Right ventricle myocardium inferior (tissue), 1 donor: ENCODE measurements at regions of chr3 and their contacts with region 1.

Region 1: DNA sequence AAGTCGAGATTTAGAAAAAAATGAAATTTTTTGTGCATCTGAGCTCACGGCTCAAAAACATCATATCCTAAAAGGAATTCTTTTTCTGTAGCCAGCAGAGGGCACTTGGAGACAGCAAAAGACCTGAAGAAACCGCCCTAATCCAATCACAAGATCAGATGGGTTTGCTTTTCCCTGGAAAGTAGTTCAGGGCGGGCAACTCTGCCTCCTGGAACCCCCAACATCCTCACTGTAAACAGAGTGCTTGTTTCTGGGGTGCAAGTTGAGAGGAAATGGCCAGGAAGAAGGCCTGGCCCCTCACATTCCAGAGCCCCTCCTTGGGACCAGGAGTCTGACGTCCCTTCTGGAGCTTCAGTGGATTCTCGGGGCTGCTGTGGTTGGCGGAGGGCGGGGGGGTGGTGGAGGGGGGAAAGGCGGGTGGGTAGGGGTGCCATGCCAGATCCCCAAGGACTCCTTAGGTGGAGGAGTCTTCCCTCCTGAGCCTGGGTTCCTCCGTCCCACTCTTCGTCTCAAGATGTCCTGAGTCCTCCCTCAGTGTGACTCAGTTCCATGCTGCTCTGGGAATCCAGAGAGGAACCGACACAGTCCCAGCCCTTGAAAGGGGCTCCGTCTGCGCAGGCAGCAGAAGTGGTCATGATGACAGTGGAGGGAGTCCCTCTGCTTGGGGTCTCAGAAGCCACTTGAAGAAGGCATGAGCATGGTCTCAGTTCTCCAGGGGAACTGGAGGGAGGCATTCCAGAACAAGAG is 35.9 kb downstream of the CCK start:
- DNase-seq: no peak
- ATAC-seq: no peak

Region 2: DNA sequence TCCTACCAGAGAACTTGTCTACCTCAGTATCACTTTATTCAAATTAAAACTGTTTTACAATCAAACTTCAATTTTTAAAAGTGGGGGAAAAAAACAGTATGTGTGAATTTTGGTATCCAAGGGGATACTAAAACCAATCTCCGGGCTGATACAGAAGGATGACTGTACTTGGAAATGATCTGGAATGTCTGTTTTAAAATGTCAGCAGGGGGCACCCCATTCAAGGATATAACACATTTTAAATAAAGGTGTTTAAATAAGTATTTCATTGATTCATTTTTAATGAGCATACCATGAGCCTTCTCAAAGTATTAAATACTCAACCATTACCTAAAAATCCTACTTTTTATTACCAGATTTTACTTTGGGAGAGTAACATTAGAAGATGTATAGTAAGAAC is 336.1 kb before region 1 on chr3:
- intact Hi-C with region 1: loop called (anchors 10 kb)
- DNase-seq: no peak
- ATAC-seq: no peak

Region 3: DNA sequence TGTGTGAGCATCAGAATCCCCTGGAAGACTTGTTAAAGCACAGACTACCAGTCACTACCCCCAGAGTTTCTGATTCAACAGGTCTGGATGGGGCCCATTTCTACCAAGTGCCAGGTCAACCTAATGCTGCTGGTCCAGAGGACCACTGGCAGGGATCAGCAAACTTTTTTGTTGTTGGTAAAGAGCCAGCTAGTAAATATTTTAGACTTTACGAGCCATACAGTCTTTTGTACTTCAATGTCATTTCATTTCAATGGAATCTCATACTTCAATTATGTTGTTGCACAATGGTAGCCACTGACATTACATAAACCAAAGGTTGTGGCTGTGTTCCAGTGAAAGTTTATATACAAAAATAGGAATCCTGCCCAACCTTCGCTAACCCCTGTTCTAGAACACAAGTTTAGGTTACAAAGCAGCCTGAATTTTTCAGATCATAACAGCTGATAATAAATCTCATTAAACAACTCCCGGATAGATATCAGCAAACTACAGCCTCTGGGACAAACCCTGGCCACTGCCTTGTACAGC is 296.9 kb before region 1 on chr3:
- intact Hi-C with region 1: no loop called
- DNase-seq: no peak
- ATAC-seq: no peak

Region 4: DNA sequence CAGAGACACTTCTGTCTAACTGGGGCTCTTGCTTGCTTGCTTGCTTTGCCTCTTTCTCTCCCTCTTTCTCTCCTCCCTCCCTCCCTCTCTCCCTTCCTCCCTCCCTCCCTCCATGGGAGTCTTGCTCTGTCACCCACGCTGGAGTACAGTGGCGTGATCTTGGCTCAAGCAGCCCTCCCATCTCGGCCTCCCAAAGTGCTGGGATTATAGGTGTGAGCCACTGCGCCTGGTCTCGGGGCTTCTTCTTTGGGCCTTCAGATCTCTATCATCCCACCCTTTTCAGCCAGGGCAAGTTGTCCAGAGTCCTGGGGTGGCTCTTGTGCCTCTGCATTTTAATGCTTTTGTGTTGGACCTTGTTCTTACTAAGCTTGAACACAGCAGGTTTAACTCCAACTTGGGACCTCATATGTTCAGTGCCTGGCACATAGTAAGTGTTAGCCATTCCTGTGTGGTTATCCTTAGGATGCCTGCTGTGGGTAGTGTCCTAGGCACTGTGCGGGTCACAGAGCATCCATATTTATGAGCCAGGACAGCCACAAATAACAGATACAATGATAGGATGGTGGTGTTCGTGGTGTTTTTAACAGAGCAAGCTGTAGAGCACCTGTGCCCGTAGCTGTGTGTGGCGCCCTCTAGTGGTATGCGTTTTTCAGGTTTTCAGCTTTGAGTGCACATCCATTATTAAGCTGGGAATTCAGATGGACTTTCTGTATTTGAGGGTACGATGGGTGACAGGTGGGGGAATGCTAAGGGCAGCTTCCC is 39.2 kb before region 1 on chr3:
- intact Hi-C with region 1: no loop called
- DNase-seq: no peak
- ATAC-seq: peak; percentile 42

Region 5: GRCh38 chr3:42443819-42444436 is 213.8 kb after region 1 on chr3:
- intact Hi-C with region 1: loop called (anchors 5 kb)
- DNase-seq: peak; percentile 84
- ATAC-seq: peak; percentile 89

Region 6: DNA sequence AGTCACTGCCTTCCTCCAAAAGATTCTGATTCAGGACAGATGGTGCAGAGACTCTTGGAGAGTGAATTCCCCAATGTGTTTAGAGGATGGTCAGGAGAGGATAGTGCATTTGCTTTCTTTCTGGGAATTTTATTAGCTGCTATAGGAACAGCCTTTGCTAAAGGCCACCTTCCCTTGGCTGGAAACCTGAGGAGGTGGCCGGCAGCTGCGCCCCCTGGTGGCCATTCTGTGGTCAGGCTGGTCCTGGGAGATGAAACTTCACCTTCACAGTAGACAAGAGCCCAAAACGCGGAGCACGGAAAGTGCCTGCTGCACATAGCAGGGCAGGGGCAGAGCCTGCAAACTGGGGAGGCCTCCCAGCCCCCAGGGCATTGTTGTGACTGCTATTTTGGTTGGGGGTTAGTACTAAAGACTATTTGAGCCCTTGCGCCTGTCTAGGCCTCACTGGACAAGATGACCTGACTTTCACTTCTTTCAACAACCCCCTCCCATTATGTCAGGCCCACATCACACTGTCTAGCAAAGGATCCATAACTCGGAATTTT is 317.4 kb after region 1 on chr3:
- intact Hi-C with region 1: loop called (anchors 5 kb)
- DNase-seq: peak; percentile 87
- ATAC-seq: peak; percentile 64

Region 7: DNA sequence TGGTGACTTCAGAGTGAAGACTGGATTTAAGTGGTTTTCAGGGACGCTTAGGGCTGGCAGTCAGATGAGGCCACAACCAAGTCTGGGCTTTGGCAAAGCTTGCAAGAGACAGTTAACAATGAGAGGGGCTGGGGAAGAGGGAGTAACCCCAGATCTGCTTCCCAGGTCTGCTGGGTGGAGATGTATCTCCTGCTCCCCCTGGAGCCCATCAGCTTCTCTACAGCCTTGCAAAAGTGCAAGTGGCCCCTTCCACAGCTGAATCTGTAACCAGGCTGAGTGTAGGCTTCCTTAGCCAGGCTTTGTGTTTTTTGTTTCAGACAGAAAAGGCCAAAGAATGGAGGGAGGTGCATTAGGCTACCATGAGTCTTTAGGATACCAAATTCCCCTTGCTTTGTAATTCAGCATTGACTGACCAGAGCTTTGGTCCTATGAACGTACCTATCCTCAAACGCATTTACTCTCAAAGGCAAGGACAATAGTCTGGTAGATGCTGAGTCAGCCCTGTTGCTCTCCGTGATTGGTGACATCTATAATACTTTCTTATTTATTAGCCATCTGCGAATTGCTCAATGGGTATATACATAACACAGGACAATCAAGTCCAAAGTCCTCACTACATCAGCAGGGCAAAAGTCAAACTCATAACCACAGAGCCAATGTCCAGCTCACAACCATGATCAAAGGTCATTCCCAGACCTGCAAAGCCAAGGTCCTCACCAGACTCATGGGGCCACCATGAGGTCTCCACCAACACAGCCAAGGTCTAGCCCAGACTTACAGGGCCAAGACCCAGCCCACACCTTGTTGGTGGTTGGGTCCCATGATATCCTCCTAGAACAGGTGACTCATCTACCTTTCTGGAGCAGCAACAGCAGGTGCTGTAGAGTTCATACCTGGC is 525.8 kb after region 1 on chr3:
- intact Hi-C with region 1: loop called (anchors 10 kb)
- DNase-seq: no peak
- ATAC-seq: no peak